Right lobe of liver (tissue), 6 donors: ENCODE measurements at regions of chr3 and their contacts with region 1.

Region 1: GRCh38 chr3:171561596-171562323 is 101.6 kb upstream of the TNIK start:
- DNase-seq: no peak
- ATAC-seq: no peak
- H3K4me3 ChIP-seq: no peak overlapping the region
- H3K27ac ChIP-seq: no peak overlapping the region
- H3K4me1 ChIP-seq: no peaks in the 10 kb centered on the region
- H3K27me3 ChIP-seq: no peaks in the 10 kb centered on the region
- CTCF ChIP-seq: no peak
- POLR2A ChIP-seq: no peak

Region 2: GRCh38 chr3:171192176-171192854 is 369.4 kb before region 1 on chr3:
- intact Hi-C with region 1: loop called in 1 of 2 experiments (anchors 5 kb)
- DNase-seq: no peak
- ATAC-seq: no peak
- H3K4me3 ChIP-seq: no peak overlapping the region
- H3K27ac ChIP-seq: no peak overlapping the region
- H3K4me1 ChIP-seq: peaks cover 0 to 10% (median under 1%) of the 10 kb centered on the region in 4 donors
- H3K27me3 ChIP-seq: no peaks in the 10 kb centered on the region
- CTCF ChIP-seq: no peak
- POLR2A ChIP-seq: no peak

Region 3: DNA sequence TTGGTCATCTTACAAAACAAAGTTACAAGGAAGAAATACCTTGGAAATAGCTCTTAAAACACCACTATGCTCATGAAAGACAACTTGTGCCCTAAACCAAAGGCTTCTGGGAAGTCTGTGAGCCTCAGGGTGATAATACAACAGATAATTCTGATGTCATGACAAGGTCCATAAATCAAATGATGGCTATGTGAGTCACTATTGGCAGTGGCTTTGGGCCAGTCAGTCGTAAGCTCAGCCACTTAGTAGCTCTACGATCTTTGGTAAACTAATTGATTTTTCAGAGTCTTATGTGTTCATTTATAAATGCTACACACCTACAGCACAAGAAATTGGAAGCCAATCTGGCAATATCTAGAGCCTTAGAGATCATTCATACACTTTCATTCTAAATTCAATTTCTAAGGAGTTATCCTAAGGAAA is 114.4 kb before region 1 on chr3:
- intact Hi-C with region 1: no loop called
- DNase-seq: peak in 1 of 3 donors; percentile 39
- ATAC-seq: peak; percentile 13 to 99 (median 48)
- H3K4me3 ChIP-seq: no peak overlapping the region
- H3K27ac ChIP-seq: no peak overlapping the region
- H3K4me1 ChIP-seq: peaks cover 0 to 6% (median 0%) of the 10 kb centered on the region in 4 donors
- H3K27me3 ChIP-seq: no peaks in the 10 kb centered on the region
- CTCF ChIP-seq: no peak
- POLR2A ChIP-seq: no peak

Region 4: GRCh38 chr3:172685346-172686214 is 1123.8 kb after region 1 on chr3:
- intact Hi-C with region 1: no loop called
- DNase-seq: no peak
- ATAC-seq: no peak
- H3K4me3 ChIP-seq: no peak overlapping the region
- H3K27ac ChIP-seq: no peak overlapping the region
- H3K4me1 ChIP-seq: no peaks in the 10 kb centered on the region
- H3K27me3 ChIP-seq: no peaks in the 10 kb centered on the region
- CTCF ChIP-seq: no peak
- POLR2A ChIP-seq: no peak